Heart left ventricle (tissue), 16 donors: ENCODE measurements at regions of chr13 and their contacts with region 1.

Region 1: DNA sequence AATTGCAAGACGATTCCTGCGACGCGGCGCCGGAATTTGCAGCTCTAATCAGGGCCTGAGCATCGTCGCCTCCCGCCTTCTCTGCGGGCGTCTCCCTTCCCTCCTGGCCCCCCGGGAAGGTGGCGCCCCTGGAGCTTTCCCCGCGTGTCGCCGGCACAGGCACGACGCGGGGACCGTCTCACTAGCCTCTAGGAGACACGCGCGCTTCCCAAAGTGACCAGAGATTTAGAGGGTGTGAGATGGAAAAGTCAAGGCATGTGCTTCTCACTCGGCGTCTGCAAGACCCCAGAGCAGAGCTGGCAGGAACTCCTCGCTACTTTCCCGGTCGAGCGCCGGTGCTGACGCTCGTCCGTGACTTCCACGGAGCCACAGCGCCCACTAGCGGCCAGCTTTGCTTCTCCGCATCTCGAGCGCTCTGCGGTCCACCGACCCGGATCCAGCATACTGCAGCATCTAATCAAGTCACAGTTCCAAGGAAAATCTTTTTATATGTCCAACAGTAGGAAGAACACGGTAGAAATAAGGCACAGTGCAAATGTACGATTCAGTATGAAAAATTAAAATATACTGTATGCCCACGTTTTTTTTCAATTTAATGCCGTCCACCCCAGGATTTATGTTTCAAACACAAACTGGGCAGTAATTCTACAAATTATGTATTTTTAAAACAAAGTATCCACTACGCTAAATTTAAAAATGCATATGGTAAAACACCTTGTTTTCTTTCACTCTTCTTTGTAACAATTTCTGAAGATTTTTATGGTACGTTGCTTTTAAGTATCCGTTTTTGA is 977 bp upstream of the EFNB2 start:
- DNase-seq: peak; percentile 90 to 96 (median 91)
- ATAC-seq: peak; percentile 70 to 86 (median 82)
- H3K4me3 ChIP-seq: peak overlapping the region; percentile 59 to 83 (median 74)
- H3K27ac ChIP-seq: peak overlapping the region; percentile 51 to 89 (median 74)
- H3K4me1 ChIP-seq: peaks cover 0 to 41% (median 13%) of the 10 kb centered on the region in 12 donors
- H3K27me3 ChIP-seq: peaks cover 0 to 29% (median 0%) of the 10 kb centered on the region in 9 donors
- CTCF ChIP-seq: peak; percentile 87 to 99 (median 97)
- POLR2A ChIP-seq: no peak

Region 2: GRCh38 chr13:104773775-104774174 is 1762.7 kb before region 1 on chr13:
- intact Hi-C with region 1: loop called in 4 of 10 experiments (anchors 10 kb)
- DNase-seq: no peak
- ATAC-seq: no peak
- H3K4me3 ChIP-seq: no peak overlapping the region
- H3K27ac ChIP-seq: no peak overlapping the region
- H3K4me1 ChIP-seq: peaks cover 0 to 4% (median 0%) of the 10 kb centered on the region in 12 donors
- H3K27me3 ChIP-seq: no peaks in the 10 kb centered on the region
- CTCF ChIP-seq: peak; percentile 25 to 70 (median 49)
- POLR2A ChIP-seq: no peak

Region 3: GRCh38 chr13:105502193-105502592 is 1034.2 kb before region 1 on chr13:
- intact Hi-C with region 1: no loop called
- DNase-seq: no peak
- ATAC-seq: no peak
- H3K4me3 ChIP-seq: no peak overlapping the region
- H3K27ac ChIP-seq: no peak overlapping the region
- H3K4me1 ChIP-seq: no peaks in the 10 kb centered on the region
- H3K27me3 ChIP-seq: no peaks in the 10 kb centered on the region
- CTCF ChIP-seq: no peak
- POLR2A ChIP-seq: no peak

Region 4: DNA sequence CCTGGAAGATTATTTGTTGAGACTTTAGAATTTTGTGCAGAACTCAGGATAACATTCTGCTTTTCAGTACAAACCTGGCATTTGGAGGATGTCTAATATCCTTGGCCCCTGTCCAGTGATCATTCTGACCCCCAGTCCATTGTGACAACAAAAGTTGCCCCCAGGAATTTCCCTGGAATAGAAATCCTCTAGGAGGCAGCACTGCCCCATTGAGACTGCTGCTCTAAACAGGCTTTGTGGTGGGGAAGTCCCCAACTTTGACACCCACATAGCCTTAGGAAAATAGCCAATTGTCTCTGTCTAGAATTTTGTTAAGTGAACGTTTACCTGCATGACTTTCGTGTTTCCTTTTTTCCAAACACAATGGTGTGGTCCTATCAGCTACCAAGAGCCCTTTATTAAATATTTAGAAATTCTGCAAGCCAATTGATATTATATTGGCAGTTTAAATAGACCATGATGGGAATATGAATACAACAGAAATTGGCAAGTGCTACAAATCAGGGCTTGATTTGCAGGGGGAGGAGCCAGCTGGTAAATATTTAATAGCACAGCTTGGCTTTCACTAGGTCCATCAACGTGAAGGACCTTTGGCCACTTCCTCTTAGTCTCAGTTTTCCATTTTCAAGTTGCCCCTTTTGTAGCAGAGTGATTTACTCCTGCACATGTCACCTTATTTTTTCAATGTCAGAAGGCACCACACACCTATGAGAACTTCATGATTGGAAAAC is 452.7 kb before region 1 on chr13:
- intact Hi-C with region 1: loop called in 7 of 10 experiments (anchors 2 to 5 kb)
- DNase-seq: peak in 2 of 5 donors; percentile 17 to 23
- ATAC-seq: peak in 3 of 4 donors; percentile 33 to 63 (median 52)
- H3K4me3 ChIP-seq: no peak overlapping the region
- H3K27ac ChIP-seq: no peak overlapping the region
- H3K4me1 ChIP-seq: peaks cover 0 to 3% (median 0%) of the 10 kb centered on the region in 12 donors
- H3K27me3 ChIP-seq: no peaks in the 10 kb centered on the region
- CTCF ChIP-seq: peak; percentile 27 to 74 (median 56)
- POLR2A ChIP-seq: no peak

Region 5: GRCh38 chr13:106599875-106600797 is 63.7 kb after region 1 on chr13:
- intact Hi-C with region 1: no loop called
- DNase-seq: peak in 2 of 5 donors; percentile 33 to 39
- ATAC-seq: no peak
- H3K4me3 ChIP-seq: no peak overlapping the region
- H3K27ac ChIP-seq: no peak overlapping the region
- H3K4me1 ChIP-seq: peaks cover 0 to 29% (median 7%) of the 10 kb centered on the region in 12 donors
- H3K27me3 ChIP-seq: no peaks in the 10 kb centered on the region
- CTCF ChIP-seq: no peak
- POLR2A ChIP-seq: no peak

Region 6: GRCh38 chr13:106619688-106620555 is 83.5 kb after region 1 on chr13:
- intact Hi-C with region 1: loop called in 6 of 10 experiments (anchors 2 to 5 kb)
- DNase-seq: peak in 2 of 5 donors; percentile 34 to 46
- ATAC-seq: peak; percentile 88 to 93 (median 89)
- H3K4me3 ChIP-seq: peak overlapping the region in 8 of 12 donors; percentile 18 to 38 (median 32)
- H3K27ac ChIP-seq: peak overlapping the region in 8 of 12 donors; percentile 8 to 65 (median 42)
- H3K4me1 ChIP-seq: peaks cover 0 to 20% (median 5%) of the 10 kb centered on the region in 12 donors
- H3K27me3 ChIP-seq: peaks cover 0 to 8% (median 0%) of the 10 kb centered on the region in 9 donors
- CTCF ChIP-seq: peak; percentile 61 to 89 (median 79)
- POLR2A ChIP-seq: no peak

Region 7: GRCh38 chr13:107124129-107124718 is 587.8 kb after region 1 on chr13:
- intact Hi-C with region 1: loop called in 3 of 10 experiments (anchors 5 to 10 kb)
- DNase-seq: no peak
- ATAC-seq: no peak
- H3K4me3 ChIP-seq: no peak overlapping the region
- H3K27ac ChIP-seq: no peak overlapping the region
- H3K4me1 ChIP-seq: peaks cover 0 to 5% (median 0%) of the 10 kb centered on the region in 12 donors
- H3K27me3 ChIP-seq: no peaks in the 10 kb centered on the region
- CTCF ChIP-seq: peak; percentile 40 to 80 (median 68)
- POLR2A ChIP-seq: no peak